Panc1 (cell line): ENCODE measurements at regions of chr2 and their contacts with region 1.

Region 1: GRCh38 chr2:20135631-20136050 is 84.2 kb upstream of the LAPTM4A start:
- DNase-seq: peak; percentile 45
- ATAC-seq: peak; percentile 85
- H3K4me3 ChIP-seq: no peak overlapping the region
- H3K27ac ChIP-seq: no peak overlapping the region
- H3K4me1 ChIP-seq: no peaks in the 10 kb centered on the region
- H3K27me3 ChIP-seq: no peaks in the 10 kb centered on the region; the same call in 1 of the 2 replicates
- CTCF ChIP-seq: peak; percentile 92

Region 2: GRCh38 chr2:19796035-19796695 is 339.5 kb before region 1 on chr2:
- CTCF ChIA-PET with region 1: no interaction called
- POLR2A ChIA-PET with region 1: no interaction called
- in situ Hi-C with region 1: no loop called
- intact Hi-C with region 1: no loop called
- DNase-seq: no peak
- ATAC-seq: no peak
- H3K4me3 ChIP-seq: no peak overlapping the region
- H3K27ac ChIP-seq: no peak overlapping the region
- H3K4me1 ChIP-seq: peaks cover 16% of the 10 kb centered on the region
- H3K27me3 ChIP-seq: no peaks in the 10 kb centered on the region
- CTCF ChIP-seq: no peak

Region 3: DNA sequence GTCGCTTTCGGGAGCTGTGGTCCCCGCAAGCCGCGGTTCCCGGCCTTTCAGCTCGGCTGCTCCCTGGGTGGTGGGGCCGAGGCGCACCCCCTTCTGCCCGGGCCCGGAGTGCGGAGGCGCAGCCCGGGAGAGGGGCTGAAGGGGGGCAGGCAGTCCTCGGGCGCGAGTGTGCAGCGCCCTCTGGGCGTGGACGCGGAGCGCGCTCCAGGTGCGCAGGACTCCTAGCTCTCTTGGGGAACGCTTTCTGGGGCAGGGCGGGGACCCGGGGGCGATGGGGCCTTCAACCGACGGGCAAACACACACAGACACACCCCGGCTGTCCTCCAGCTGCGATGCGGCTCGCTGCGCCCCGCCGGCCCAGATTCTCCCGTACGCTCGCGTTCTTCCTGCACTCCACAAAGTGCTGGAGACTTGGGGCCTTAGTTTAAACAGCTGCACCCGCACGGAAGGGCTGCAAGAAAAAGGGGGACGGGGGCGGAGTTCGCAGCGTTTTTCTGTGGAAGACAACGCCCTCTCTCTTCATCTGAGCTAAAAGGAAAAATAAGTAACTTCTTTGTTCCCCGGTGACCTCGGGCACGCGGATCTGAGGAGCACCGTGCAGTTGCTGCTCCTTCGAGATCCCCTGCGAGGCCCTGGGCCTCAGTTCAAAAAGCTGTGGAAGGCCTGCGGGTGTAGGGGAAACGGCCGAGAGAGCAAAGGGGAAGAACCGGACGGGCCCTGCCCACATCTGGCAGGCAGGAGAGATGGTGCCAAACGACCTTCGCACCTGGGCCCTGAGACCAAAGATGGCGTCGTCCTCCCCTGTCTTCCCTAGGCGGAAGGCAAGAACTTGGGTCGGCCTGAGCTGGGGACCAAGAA is 89.9 kb after region 1 on chr2:
- CTCF ChIA-PET with region 1: interaction called, 8 read pairs
- POLR2A ChIA-PET with region 1: no interaction called
- in situ Hi-C with region 1: no loop called
- intact Hi-C with region 1: loop called (anchors 1 kb)
- DNase-seq: no peak
- ATAC-seq: peak; percentile 85
- H3K4me3 ChIP-seq: peak overlapping the region; percentile 68 to 81
- H3K27ac ChIP-seq: peak overlapping the region; percentile 57
- H3K4me1 ChIP-seq: peaks cover 30% of the 10 kb centered on the region
- H3K27me3 ChIP-seq: no peaks in the 10 kb centered on the region
- CTCF ChIP-seq: peak; percentile 92